PC-3 (cell line): ENCODE measurements at regions of chr10 and their contacts with region 1.

Region 1: DNA sequence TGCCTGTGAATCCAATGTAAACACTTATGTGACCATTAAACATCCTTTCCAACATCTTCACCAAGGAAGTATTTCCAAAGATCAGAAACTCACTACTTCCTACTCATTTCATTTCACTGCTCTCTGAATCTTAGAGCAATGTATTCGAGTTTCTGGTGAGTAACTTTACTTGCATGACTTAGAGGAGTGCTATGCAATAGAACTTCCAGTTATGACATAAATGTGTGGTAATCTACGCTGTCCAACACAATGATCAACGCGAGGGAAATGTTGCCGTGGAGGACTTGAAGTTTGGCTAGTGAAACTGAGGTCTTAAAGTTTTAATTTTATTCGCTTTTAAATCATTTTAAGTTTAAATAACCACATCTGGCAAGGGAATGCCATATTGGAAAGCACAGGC is 1326.3 kb downstream of the XPNPEP1 start:
- DNase-seq: peak; percentile 77
- ATAC-seq: peak; percentile 20
- H3K4me3 ChIP-seq: peak overlapping the region; percentile 43
- H3K27ac ChIP-seq: peak overlapping the region; percentile 98
- H3K4me1 ChIP-seq: peaks cover 49% of the 10 kb centered on the region
- H3K27me3 ChIP-seq: no peaks in the 10 kb centered on the region
- CTCF ChIP-seq: no peak

Region 2: GRCh38 chr10:108561649-108562048 is 35.4 kb before region 1 on chr10:
- CTCF ChIA-PET with region 1: no interaction called
- POLR2A ChIA-PET with region 1: no interaction called
- intact Hi-C with region 1: loop called (anchors 5 kb)
- DNase-seq: peak; percentile 95
- ATAC-seq: peak; percentile 84
- H3K4me3 ChIP-seq: no peak overlapping the region
- H3K27ac ChIP-seq: peak overlapping the region; percentile 57
- H3K4me1 ChIP-seq: peaks cover 32% of the 10 kb centered on the region
- H3K27me3 ChIP-seq: no peaks in the 10 kb centered on the region
- CTCF ChIP-seq: no peak

Region 3: GRCh38 chr10:108721882-108722281 is 124.9 kb after region 1 on chr10:
- CTCF ChIA-PET with region 1: interaction called, 3 read pairs
- POLR2A ChIA-PET with region 1: no interaction called
- intact Hi-C with region 1: loop called (anchors 10 kb)
- DNase-seq: peak; percentile 60
- ATAC-seq: peak; percentile 96
- H3K4me3 ChIP-seq: no peak overlapping the region
- H3K27ac ChIP-seq: no peak overlapping the region; the same call in 1 of the 2 replicates
- H3K4me1 ChIP-seq: no peaks in the 10 kb centered on the region
- H3K27me3 ChIP-seq: no peaks in the 10 kb centered on the region
- CTCF ChIP-seq: no peak

Region 4: DNA sequence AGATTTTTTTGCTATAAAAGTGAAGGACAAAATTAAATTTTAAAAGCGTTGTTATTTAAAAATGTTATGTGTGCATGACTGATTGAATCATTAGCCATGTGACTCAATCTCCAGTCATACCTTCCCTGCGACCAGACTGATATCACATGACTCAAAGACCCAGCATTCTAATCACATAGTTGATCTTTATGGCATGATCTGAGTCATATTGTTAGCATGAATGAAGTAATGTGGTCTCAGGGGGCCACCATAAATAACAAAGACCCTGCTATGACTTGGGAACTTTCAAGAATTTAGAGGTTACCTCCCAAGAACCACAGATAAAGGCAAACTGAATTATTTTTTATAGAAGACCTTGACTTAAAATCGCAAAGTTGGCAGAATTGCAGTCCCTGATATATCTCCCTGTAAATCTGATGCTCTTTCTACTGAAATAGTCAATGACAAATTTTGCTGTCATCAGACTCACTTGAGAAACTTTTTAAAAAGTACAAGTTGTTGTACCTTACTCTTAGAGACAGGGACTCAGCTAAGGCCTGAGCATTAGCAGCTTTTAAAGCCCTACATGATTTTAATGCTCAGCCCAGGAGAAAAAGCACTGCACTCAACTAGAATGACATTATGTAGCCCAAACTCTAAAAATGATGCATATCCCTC is 609.0 kb after region 1 on chr10:
- CTCF ChIA-PET with region 1: no interaction called
- POLR2A ChIA-PET with region 1: no interaction called
- intact Hi-C with region 1: no loop called
- DNase-seq: peak; percentile 82
- ATAC-seq: peak; percentile 82
- H3K4me3 ChIP-seq: no peak overlapping the region
- H3K27ac ChIP-seq: peak overlapping the region; percentile 85
- H3K4me1 ChIP-seq: peaks cover 15% of the 10 kb centered on the region
- H3K27me3 ChIP-seq: no peaks in the 10 kb centered on the region
- CTCF ChIP-seq: no peak